ENCODE measurements at regions of chr11 and their contacts with region 1.

Region 1: DNA sequence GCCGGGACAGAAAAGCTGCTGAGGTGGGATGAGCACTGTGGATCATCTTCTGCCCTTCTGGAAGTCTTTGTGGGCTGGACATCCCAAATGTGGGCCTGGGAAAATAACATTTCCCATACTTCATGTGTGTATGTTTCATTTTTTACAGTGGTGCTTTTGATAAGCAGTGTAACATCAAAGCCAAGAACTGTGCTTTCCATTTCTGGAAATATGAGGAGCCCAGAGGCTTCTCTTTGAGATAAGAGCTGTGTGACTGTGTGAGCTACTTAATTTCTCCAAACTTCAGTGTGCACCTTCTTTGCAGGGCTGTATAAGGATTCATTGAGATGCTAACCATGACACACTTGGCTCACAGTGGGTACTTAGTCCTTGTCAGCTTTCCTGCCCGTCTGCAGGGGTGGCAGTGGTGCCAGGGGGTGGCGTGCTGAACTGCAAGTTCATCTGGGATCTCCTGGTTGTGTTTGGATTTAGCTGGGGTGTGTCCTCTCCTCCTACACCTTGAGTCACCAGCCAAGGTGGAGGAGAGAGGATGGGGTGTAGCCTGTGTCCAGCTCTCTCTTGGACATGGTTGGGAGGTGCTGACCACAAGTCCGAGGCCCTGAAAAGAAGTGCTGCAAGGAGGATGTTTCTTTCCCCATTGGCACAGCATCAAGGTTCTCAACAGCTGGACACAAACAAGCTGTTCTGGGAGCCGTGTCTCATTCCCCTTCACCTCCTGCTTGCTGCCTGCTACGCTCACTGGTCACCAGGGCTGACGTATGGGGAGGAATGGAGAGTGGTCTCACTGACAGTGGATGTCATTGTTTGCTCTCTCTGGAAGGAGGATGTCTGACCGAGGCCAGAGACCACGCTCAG is 139.4 kb downstream of the TEAD1 start:
- DNase-seq: peak; percentile 75
- H3K4me3 Mint-ChIP-seq: no peak overlapping the region
- H3K27ac Mint-ChIP-seq: peak overlapping the region; percentile 26
- H3K4me1 Mint-ChIP-seq: peaks cover 57% of the 10 kb centered on the region
- H3K27me3 Mint-ChIP-seq: no peaks in the 10 kb centered on the region
- CTCF ChIP-seq: peak; percentile 23

Region 2: DNA sequence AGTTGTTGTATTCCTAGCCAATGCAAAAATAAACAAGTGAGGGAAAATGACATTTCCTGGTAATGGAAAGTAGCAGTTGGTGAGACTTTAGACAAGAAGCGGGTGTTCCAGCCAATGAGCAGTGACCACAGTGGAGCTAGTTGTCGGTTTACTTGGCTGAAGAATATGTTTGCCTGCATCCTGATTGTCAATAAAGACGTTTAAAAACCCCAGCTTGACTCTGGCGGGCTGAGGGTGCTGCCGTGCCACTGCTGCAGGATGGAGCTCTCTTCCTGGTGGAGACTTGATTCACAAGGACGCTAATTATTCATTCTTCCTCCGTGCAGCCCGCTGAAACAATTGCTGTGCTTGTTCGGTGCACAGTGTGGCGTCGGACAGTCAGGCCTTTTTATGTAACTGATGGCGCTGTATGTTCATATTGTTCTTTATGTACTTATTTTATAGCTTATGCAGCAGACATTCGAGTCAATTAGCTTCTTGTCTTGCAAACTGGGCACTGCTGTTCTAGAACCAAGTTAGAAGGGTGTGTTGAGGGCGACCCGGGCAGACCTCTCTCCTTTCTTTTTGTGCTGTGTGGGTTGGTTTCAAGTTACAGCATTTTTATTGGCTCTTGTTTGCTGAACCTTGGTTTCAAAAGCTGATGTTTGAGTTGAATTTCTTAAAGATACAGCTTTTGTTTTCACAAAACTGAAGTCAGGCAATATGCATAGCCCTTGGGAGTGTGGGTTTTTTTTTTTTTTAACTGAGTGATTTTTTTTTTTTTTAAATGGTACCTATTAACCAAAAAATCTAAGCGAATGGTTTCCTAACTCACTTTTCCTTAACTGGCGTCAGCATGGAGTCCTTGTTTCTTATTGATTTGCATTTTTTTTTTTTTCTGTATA is 14.6 kb after region 1 on chr11:
- CTCF ChIA-PET with region 1: interaction called, 5 read pairs
- POLR2A ChIA-PET with region 1: interaction called, 28 read pairs
- intact Hi-C with region 1: no loop called
- DNase-seq: peak; percentile 79
- H3K4me3 Mint-ChIP-seq: peak overlapping the region; percentile 80
- H3K27ac Mint-ChIP-seq: peak overlapping the region; percentile 85
- H3K4me1 Mint-ChIP-seq: peaks cover 29% of the 10 kb centered on the region
- H3K27me3 Mint-ChIP-seq: no peaks in the 10 kb centered on the region
- CTCF ChIP-seq: no peak

Region 3: GRCh38 chr11:12888525-12889158 is 75.0 kb after region 1 on chr11:
- CTCF ChIA-PET with region 1: interaction called, 12 read pairs
- POLR2A ChIA-PET with region 1: interaction called, 4 read pairs
- intact Hi-C with region 1: loop called (anchors 1 kb)
- DNase-seq: peak; percentile 85
- H3K4me3 Mint-ChIP-seq: no peak overlapping the region
- H3K27ac Mint-ChIP-seq: peak overlapping the region; percentile 84
- H3K4me1 Mint-ChIP-seq: peaks cover 17% of the 10 kb centered on the region
- H3K27me3 Mint-ChIP-seq: no peaks in the 10 kb centered on the region
- CTCF ChIP-seq: peak; percentile 55